ENCODE measurements at regions of chr17 and their contacts with region 1.

Region 1: DNA sequence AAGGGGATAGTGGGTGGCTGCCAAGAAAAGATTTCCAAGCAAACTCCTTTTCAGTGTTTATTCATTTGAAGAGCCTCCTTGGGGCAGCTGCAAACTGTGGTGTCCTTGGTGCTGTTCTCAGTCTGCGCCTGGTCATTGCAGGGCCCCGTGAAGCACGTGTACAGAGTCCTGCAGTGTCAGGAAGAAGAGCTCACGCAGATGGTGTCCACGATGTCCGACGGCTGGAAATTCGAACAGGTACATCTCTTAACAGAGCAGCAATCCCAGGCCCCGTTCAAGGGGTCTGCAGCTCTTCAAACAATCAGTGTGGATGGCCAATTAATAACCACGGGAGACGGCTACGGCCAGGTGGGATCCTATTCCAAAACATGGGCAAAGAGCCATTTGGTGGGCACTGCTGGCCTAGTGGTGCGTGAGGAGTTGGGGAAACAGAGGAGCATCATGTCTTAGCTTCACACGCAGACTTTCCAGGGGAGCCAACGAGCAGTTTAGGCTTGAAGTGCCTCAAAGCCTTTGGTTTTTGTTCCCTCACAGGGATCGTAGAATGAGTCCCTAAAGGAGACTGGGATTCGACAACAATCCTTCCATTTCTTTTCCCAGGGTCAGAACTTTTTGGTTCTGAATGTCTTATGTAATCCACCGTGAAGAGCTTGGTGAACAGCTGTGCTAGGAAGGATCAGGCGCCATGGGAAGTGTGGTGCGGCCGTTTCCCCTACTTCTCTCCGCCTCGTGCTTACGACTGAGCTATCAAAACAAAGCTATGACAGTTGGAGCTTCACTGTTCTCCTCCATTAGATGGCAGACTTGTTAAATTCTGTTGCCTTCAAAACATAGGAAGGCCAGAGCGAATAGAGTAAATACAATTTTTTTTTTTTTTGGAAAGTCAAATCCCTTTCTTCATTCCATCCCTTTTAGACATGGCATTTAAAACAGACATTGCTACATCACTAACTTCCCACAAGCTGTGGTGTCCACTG is 12.6 kb downstream of the KCTD2 start:
- DNase-seq: peak; percentile 24
- H3K4me3 Mint-ChIP-seq: no peak overlapping the region
- H3K27ac Mint-ChIP-seq: peak overlapping the region; percentile 69
- H3K4me1 Mint-ChIP-seq: peaks cover 21% of the 10 kb centered on the region
- H3K27me3 Mint-ChIP-seq: no peaks in the 10 kb centered on the region

Region 2: DNA sequence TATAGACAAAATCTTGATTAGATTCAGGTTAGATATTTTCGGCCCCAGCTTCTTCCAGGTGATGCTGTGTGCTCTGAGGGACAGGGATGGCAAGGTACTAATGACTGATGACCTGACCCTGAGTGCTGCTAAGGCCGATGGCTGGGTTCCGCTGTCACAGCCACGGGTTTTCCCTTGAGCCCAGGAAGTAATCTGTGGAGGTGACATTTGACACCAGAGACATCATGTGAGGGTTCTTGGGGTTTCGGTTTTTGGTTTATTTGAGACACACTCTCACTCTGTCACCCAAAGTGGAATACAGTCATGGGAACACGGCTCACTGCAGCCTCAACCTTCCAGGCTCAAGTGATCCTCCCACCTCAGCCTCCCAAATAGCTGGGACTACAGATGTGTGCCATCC is 114.1 kb before region 1 on chr17:
- CTCF ChIA-PET with region 1: no interaction called
- POLR2A ChIA-PET with region 1: no interaction called
- DNase-seq: no peak
- H3K4me3 Mint-ChIP-seq: no peak overlapping the region
- H3K27ac Mint-ChIP-seq: no peak overlapping the region
- H3K4me1 Mint-ChIP-seq: no peaks in the 10 kb centered on the region
- H3K27me3 Mint-ChIP-seq: peaks cover 16% of the 10 kb centered on the region

Region 3: DNA sequence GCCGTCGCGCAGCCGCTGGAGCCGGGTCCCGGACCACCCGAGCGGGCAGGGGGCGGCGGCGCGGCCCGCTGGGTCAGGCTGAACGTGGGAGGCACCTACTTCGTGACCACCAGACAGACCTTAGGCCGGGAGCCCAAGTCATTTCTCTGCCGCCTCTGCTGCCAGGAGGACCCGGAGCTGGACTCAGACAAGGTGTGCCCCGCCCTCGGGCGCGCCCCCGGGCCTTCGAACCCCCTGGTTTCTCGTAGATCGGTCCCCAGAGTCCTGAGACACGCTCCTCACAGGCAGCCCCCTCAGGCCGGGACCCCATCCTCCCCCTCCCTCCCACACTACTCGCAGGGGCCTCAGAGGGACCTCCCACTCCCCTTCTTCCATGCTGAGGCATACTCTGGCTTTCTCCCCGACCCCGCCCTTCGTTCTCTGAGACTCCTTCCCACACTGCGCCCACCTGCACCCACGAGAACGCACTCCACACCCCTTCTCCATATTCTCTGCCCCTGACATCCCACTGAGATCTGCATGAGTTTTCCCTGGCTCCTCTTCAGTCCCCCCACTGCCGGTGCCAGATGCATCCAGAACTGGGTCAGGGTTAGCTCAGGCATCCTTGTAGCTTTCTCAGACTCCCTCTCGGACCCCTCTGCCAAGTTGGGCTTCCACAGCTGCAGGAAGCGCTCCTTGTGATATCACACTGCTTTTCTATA is 12.1 kb before region 1 on chr17:
- CTCF ChIA-PET with region 1: interaction called, 17 read pairs
- POLR2A ChIA-PET with region 1: interaction called, 3 read pairs
- DNase-seq: peak; percentile 30
- H3K4me3 Mint-ChIP-seq: peak overlapping the region; percentile 99
- H3K27ac Mint-ChIP-seq: peak overlapping the region; percentile 94
- H3K4me1 Mint-ChIP-seq: peaks cover 45% of the 10 kb centered on the region
- H3K27me3 Mint-ChIP-seq: no peaks in the 10 kb centered on the region

Region 4: GRCh38 chr17:75069783-75070182 is 10.1 kb after region 1 on chr17:
- CTCF ChIA-PET with region 1: interaction called, 10 read pairs
- POLR2A ChIA-PET with region 1: interaction called, 13 read pairs
- DNase-seq: peak; percentile 40
- H3K4me3 Mint-ChIP-seq: no peak overlapping the region
- H3K27ac Mint-ChIP-seq: peak overlapping the region; percentile 81
- H3K4me1 Mint-ChIP-seq: peaks cover 36% of the 10 kb centered on the region
- H3K27me3 Mint-ChIP-seq: no peaks in the 10 kb centered on the region

Region 5: DNA sequence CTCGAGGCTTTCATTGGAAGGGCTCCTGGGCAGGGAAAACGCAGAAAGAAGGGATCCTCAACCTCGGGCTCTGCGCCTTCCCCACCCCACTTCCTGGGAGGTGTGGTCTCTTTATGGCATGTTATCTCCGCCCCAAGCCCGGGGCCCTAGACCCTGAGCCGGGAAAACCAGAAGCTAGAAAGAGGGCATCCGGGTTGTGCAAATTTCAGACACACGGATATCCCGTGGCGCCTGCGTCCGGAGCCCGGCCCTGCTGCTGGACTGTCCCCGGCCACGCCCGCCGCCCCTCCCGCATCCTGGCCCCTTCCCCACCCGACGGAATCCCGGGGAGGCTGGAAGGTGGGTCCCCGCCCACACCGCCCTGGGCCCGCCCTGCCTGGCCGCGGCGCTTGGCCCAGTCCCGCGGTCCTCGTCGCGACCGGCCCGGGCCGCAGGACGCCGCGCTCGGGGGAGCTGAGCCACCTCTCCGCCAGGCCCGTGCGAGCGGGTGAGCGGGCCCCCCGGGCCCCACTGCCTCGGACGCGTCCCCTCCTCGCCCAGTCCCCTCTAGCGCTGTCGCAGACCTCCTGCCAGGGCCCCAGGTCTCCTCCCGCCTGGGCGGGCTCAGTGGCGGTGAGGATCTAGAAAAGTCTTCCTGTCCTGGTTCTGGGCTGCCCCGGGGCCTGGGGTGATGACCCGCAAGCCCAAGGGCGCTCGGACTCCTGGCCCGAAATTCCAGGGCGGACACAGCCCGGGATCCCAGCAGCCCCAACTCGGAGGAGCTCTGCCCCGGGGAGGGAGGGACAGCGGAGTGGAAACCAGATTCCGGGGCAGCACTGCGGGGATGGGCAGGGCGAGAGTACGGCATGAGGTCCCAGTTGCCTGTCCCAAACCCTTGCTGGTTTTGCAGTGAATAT is 28.1 kb after region 1 on chr17 and contains the start of gene SLC16A5:
- CTCF ChIA-PET with region 1: no interaction called
- POLR2A ChIA-PET with region 1: no interaction called
- DNase-seq: peak; percentile 62
- H3K4me3 Mint-ChIP-seq: peak within 1 kb of the TSS; percentile 78
- H3K27ac Mint-ChIP-seq: peak within 1 kb of the TSS; percentile 89
- H3K4me1 Mint-ChIP-seq: peaks cover 63% of the 10 kb centered on the region
- H3K27me3 Mint-ChIP-seq: no peaks in the 10 kb centered on the region
- total RNA-seq, gene SLC16A5: 11.4 to 12.2 TPM

Region 6: GRCh38 chr17:75131280-75132017 is 71.8 kb after region 1 on chr17 and contains the start of gene NT5C:
- CTCF ChIA-PET with region 1: interaction called, 11 read pairs
- POLR2A ChIA-PET with region 1: no interaction called
- DNase-seq: peak; percentile 68
- H3K4me3 Mint-ChIP-seq: peak within 1 kb of the TSS; percentile 83
- H3K27ac Mint-ChIP-seq: peak within 1 kb of the TSS; percentile 89
- H3K4me1 Mint-ChIP-seq: peaks cover 30% of the 10 kb centered on the region
- H3K27me3 Mint-ChIP-seq: no peaks in the 10 kb centered on the region
- total RNA-seq, gene NT5C: 45.2 to 50.4 TPM